ENCODE measurements at regions of chr12 and their contacts with region 1.

Region 1: DNA sequence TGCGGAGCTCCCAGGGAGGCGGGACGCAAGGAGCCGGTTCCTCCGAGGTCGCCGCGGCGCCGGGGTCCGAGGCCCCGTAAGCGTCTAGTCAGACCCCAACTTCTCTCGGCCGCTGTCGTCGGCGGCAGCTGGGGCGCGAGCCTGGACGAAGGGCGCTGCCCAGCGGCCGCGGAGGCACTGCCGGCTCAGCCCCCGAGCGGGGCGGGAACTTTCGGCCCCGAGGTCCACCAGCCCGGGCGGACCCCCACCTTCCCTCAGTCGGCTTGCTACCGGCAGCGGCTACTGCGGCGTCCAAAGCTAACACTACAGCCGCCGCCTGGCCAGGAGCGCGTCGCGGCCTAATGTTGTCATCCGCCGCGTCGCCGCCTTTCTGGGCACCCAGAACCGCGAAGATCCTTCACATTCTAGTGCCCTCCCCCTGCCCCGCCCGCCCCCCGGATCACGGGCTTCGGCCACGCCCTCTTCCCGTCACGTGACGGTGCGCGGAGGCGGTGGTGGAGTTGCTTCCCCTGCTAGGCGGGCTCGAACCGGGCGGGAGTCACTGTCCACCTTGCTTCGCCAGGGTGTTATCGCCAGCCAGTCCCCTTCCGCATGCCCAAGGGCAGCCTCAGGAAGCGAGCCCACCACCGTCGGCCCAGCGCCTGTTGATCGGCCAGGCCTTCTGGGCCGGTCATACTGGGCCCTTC is at the start of gene OSBPL8:
- DNase-seq: peak; percentile 96 to 98 (median 97)
- ATAC-seq: peak; percentile 95 to 98 (median 96)
- H3K4me3 ChIP-seq: peak within 1 kb of the TSS; percentile 63 to 95 (median 88)
- H3K27ac ChIP-seq: peak within 1 kb of the TSS; percentile 80 to 95 (median 92)
- H3K4me1 ChIP-seq: peaks cover 0 to 47% (median 24%) of the 10 kb centered on the region in 12 donors
- H3K27me3 ChIP-seq: no peaks in the 10 kb centered on the region
- CTCF ChIP-seq: peak in 9 of 12 donors; percentile 11 to 62 (median 44)
- POLR2A ChIP-seq: peak in 1 of 2 donors; percentile 90
- total RNA-seq, gene OSBPL8: 27.9 to 58.7 (median 46.4) TPM

Region 2: GRCh38 chr12:76055393-76055792 is 504.1 kb before region 1 on chr12:
- intact Hi-C with region 1: loop called in 1 of 10 experiments (anchors 10 kb)
- DNase-seq: no peak
- ATAC-seq: no peak
- H3K4me3 ChIP-seq: no peak overlapping the region
- H3K27ac ChIP-seq: no peak overlapping the region
- H3K4me1 ChIP-seq: no peaks in the 10 kb centered on the region
- H3K27me3 ChIP-seq: no peaks in the 10 kb centered on the region
- CTCF ChIP-seq: no peak
- POLR2A ChIP-seq: no peak

Region 3: DNA sequence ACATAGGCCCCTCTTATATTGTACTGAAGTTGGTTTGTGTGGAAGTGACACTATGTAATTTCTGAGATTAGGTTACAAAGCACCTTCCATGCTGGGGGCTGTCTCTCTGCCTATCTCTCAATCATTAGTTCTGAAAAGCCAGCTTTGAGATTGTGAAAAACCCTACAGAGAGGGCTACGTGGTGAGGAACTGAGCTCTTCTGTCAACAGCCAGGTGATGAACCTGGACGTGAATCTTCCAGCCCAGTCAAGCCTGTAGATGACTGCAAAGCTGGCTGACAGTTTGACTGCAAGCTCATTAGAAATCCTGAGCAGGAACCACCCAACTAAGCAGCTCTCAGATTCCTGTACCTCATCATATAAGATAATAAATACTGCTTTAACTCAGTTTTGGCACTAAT is 175.0 kb before region 1 on chr12:
- intact Hi-C with region 1: loop called in 1 of 10 experiments (anchors 10 kb)
- DNase-seq: no peak
- ATAC-seq: no peak
- H3K4me3 ChIP-seq: no peak overlapping the region
- H3K27ac ChIP-seq: no peak overlapping the region
- H3K4me1 ChIP-seq: no peaks in the 10 kb centered on the region
- H3K27me3 ChIP-seq: no peaks in the 10 kb centered on the region
- CTCF ChIP-seq: no peak
- POLR2A ChIP-seq: no peak

Region 4: DNA sequence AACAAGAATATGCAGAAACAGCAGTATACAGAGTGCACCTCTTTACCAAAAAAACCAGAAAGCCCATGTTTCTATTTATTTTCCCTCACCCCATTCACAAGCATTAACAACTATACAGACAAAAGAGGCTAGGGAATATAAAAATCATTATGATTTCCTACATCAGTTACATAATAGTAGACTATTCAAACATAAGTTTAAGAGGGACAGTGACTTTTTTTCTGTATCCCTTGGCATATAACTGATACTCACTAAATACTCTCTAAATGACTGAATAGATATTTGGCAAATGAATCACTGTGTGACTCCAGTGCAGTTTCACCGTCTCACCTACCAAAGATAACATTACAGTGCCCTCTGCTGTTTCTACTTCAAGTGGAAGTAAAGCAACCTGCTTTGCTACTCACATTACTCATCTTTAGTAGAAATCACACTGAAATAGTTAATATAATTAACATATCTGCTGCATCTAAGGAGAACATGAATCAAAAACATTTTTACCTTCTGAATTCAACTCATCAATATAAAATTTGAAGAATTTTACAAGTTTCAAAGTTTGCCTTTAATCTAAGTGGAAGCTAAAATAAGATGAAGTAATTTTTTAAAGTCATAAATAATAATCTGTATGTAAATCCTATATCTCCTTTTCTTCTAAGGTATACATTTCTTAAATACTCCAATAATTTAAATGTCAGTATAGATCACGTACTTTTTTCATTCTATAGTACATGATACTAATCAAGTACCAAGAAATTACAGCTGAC is 103.8 kb before region 1 on chr12:
- intact Hi-C with region 1: loop called in 2 of 10 experiments (anchors 5 to 10 kb)
- DNase-seq: no peak
- ATAC-seq: peak; percentile 55 to 85 (median 74)
- H3K4me3 ChIP-seq: no peak overlapping the region
- H3K27ac ChIP-seq: no peak overlapping the region
- H3K4me1 ChIP-seq: peaks cover 0 to 17% (median 2%) of the 10 kb centered on the region in 12 donors
- H3K27me3 ChIP-seq: no peaks in the 10 kb centered on the region
- CTCF ChIP-seq: peak; percentile 5 to 65 (median 50)
- POLR2A ChIP-seq: no peak

Region 5: GRCh38 chr12:76470028-76470939 is 89.3 kb before region 1 on chr12:
- intact Hi-C with region 1: loop called in 4 of 10 experiments (anchors 5 to 10 kb)
- DNase-seq: peak in 2 of 5 donors; percentile 34 to 35
- ATAC-seq: peak; percentile 97 to 98 (median 98)
- H3K4me3 ChIP-seq: no peak overlapping the region
- H3K27ac ChIP-seq: peak overlapping the region; percentile 28 to 88 (median 76)
- H3K4me1 ChIP-seq: peaks cover 0 to 46% (median 22%) of the 10 kb centered on the region in 12 donors
- H3K27me3 ChIP-seq: no peaks in the 10 kb centered on the region
- CTCF ChIP-seq: no peak
- POLR2A ChIP-seq: no peak